GM10248 (cell line): ENCODE measurements at regions of chr18 and their contacts with region 1.

Region 1: GRCh38 chr18:51135795-51136194 is 61.7 kb downstream of the MEX3C start:
- DNase-seq: no peak
- CTCF ChIP-seq: no peak

Region 2: GRCh38 chr18:51123936-51124486 is 11.8 kb before region 1 on chr18:
- CTCF ChIA-PET with region 1: interaction called, 14 read pairs
- POLR2A ChIA-PET with region 1: no interaction called
- DNase-seq: no peak
- CTCF ChIP-seq: no peak